Activated naive CD4-positive, alpha-beta T cell treated with anti-CD3 and anti-CD28 coated beads for 36 hours (primary cell): ENCODE measurements at regions of chr12 and their contacts with region 1.

Region 1: DNA sequence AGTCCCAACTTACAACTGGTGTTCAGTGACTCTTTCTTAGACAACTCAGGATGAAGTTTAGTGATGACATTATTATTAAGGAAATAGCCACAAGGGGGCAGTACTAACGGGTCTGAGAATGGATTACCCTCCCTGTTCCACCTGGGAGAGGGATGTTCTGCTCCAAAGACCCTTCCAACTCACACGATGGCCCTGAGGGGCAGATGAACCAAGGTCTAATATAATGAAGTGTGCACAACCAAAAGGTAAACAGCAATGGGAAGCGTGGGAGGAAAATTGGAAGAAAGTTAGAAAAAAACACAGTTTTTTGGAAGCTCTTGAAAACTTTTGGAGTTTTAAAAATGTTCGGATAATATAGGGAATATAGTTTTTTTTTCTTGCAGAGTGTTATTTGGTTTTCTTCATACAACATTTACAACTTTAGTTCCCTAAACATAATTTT is 24.0 kb downstream of the FGF6 start:
- DNase-seq: peak; percentile 31
- H3K4me3 Mint-ChIP-seq: no peak overlapping the region
- H3K27ac Mint-ChIP-seq: no peak overlapping the region
- H3K4me1 Mint-ChIP-seq: no peaks in the 10 kb centered on the region
- H3K27me3 Mint-ChIP-seq: peaks cover 4% of the 10 kb centered on the region

Region 2: DNA sequence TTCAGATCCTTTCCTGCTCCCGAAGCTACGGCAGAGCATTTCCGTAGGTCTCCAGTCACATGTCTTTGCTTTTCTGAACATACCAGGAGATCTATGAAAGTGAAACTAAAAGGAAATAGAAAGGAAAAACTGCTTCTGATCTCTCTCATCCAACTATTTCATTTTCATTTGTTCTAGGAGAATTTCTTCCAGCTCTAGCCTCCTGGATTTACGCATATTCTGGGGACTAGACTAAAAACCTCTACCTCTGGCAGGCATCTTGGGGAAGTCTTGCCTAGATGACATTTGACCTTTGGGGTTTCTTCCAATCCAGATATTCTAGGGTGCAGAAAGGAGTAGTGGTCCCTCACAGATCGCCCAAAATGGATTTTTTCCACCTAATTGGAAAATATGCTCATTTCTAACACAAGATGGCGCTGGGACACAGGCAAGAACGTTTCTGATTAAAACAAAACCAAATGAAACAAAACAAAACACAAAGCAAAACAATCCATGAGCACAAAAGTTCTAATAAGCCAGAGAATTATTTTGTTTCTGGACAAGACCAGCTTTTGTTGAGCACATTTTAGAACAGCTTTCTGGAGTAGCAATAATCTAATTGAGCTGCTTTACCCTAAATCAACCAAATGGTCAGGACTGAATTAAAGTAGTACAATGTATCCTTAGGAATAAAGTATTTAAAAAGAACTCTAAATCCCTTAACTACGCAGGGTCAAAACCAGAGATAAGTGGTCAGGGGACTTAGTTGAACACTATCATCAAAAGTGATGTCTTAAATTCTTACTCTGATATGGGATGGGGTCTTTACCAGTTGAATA is 536.1 kb before region 1 on chr12:
- CTCF ChIA-PET with region 1: no interaction called
- intact Hi-C with region 1: no loop called
- DNase-seq: peak; percentile 58
- H3K4me3 Mint-ChIP-seq: no peak overlapping the region
- H3K27ac Mint-ChIP-seq: peak overlapping the region; percentile 19
- H3K4me1 Mint-ChIP-seq: peaks cover 7% of the 10 kb centered on the region
- H3K27me3 Mint-ChIP-seq: no peaks in the 10 kb centered on the region

Region 3: DNA sequence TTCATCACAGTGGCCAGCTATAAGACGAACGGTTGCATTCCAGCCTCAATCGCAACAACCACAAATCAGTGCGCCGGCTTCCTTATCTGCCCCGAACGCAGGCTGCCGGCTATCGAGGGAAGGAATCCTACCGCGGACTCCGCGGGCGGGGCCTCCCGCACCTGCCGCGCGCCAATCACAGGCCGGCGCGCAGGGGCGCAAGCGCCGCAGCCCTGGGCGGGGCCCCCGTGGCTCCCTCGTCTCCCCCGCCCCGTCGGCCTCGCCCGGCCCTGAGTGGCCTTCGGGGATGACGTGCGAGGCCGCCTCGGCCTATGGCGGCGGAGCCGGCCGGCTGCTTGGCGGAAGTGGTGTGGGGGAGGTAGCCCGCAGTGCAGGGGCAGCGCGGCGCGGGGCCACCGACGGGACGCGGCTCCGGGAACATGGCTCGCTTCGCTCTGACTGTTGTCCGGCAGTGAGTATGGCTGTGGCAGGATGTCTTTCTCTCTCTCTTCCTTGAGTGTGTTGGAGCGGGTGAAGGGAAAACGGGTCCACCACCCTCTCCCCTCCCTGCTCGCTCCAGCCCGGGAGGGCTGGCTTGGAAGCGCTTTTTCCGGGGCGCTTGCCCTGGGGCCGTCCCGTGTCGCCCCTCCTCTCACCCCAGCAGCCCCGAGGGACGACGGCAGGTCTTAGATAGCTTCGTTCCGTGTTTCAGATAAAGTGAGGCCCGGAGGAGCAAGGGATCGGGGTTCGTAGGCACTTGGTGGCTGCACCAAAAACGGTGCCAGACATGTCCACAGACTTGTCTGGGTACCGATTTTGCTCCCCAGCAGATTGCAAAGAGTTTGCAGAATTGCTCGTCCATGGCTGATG is 100.5 kb before region 1 on chr12 and contains the start of gene TIGAR:
- CTCF ChIA-PET with region 1: no interaction called
- intact Hi-C with region 1: no loop called
- DNase-seq: peak; percentile 91
- H3K4me3 Mint-ChIP-seq: peak within 1 kb of the TSS; percentile 83
- H3K27ac Mint-ChIP-seq: peak within 1 kb of the TSS; percentile 87
- H3K4me1 Mint-ChIP-seq: peaks cover 34% of the 10 kb centered on the region
- H3K27me3 Mint-ChIP-seq: no peaks in the 10 kb centered on the region
- total RNA-seq, gene TIGAR: 10.3 to 12.8 TPM

Region 4: GRCh38 chr12:4356041-4356327 is 65.6 kb before region 1 on chr12:
- CTCF ChIA-PET with region 1: interaction called, 3 read pairs
- intact Hi-C with region 1: loop called (anchors 5 kb)
- DNase-seq: peak; percentile 85
- H3K4me3 Mint-ChIP-seq: no peak overlapping the region
- H3K27ac Mint-ChIP-seq: peak overlapping the region; percentile 46
- H3K4me1 Mint-ChIP-seq: no peaks in the 10 kb centered on the region
- H3K27me3 Mint-ChIP-seq: no peaks in the 10 kb centered on the region